ENCODE measurements at regions of chr4 and their contacts with region 1.

Region 1: GRCh38 chr4:42501624-42502401 is 104.5 kb downstream of the SHISA3 start:
- DNase-seq: no peak
- ATAC-seq: peak in 1 of 2 donors; percentile 17

Region 2: DNA sequence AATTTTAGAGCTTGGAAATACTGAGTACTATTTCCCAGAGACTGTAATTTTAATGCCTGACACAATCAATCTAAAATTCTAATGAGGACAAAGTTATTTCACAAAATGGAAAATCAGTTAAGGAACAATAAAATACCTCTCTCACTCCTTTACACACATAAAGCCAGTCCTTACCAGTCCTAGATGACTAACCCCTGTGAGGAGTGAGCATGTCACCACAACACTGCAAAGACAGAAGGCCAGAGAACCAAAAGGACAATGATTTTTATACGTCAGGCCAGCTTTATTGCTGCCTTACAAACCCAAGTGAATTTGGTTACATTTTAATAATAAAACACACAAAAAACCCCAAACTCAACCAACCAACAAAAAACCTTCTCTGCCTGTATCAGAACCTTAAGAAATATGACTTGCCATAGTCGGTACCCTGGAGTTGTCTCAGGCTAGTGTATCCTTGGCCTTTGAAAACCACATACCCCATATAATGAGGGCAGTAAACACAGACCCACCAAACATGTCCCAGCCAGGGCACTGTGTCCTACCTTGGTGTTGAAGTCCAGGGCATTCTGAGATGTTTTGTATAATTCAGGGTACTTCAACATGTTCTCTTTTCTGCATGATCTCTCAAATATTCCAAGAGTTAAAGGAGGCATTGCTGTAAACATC is 46.9 kb before region 1 on chr4:
- intact Hi-C with region 1: loop called in 1 of 2 experiments (anchors 5 kb)
- DNase-seq: no peak
- ATAC-seq: no peak

Region 3: GRCh38 chr4:42627885-42628646 is 126.3 kb after region 1 on chr4:
- intact Hi-C with region 1: no loop called
- DNase-seq: peak; percentile 85
- ATAC-seq: peak; percentile 99